Common myeloid progenitor, CD34-positive (primary cell): ENCODE measurements at regions of chr1 and their contacts with region 1.

Region 1: DNA sequence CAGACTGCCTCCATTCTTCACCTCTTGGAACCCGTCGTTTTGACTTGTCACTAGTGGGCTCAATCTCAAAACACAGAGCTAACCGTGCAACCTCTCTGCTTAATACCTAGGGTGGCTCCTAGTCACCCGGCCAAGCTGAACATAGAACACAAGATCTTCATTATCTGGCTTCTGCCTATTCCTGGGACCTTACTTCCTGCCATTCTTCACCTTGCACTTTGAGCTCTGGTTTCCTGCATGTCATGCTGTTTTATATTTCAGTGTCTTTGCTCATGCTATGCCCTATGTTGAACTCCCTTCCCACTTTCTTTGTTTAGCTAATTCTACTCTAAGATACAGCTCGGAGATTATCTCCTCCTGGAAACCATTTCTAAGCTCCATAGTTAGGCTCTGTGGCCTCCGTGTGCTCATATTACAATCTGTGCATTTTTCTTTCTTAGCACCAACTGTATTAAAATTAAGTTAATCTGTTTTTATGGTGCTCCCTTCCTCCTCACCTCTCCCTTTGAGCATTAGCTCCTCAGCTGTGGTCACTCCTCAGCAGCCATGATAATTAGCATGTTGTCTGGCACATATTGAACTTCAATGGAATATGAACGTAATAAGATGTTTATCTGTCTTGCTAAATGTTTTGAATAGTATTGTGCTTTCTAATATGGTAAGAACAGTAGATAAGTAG is 13.1 kb downstream of the GPSM2 start:
- DNase-seq: no peak
- H3K4me3 ChIP-seq: peak overlapping the region in 2 of 7 experiments; percentile 31 to 54
- H3K27ac ChIP-seq: peak overlapping the region in 1 of 2 experiments; percentile 26
- H3K4me1 ChIP-seq: peaks cover 10 to 47% (median 18%) of the 10 kb centered on the region in 4 experiments
- H3K27me3 ChIP-seq: no peaks in the 10 kb centered on the region

Region 2: DNA sequence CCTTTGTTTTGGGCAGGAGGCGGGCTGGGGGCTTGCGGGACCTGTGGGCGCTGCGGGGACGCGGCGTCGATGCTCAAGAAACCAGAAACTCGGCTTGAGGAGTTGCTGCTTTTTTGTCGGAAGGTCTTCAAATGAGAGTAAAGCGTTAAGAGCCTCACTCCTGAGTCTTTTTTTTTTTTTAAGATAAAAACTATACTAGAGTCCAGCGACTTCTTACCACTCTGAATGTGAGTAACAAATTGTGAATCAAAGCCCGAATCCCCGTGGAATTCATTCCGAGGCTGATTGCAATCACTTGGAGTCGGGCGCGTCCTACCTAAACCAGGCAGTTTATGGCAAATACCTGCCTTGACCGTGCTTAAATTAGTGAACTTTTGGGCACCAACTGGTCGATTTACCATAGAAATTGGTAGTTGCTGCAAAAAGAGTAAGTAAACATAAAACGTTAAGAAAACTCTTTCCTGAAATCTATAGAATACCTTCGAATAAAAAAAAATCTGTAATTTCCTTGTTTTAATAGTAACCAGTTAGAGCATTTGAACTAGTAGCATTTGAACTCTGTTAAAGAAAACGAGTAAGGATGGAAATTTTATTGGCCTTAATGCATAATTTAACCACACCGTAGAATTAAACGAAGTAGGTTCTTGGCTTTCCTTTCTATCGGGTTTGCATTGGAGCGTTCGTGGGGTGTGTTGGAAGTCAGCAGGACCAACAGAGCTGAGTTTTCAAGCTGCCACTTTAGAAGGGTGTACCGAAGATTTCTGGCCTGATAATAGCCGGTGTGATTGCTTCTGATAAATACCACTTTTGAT is 12.3 kb before region 1 on chr1:
- CTCF ChIA-PET with region 1: interaction called, 28 read pairs
- POLR2A ChIA-PET with region 1: interaction called, 5 read pairs
- DNase-seq: peak in 1 of 3 donors; percentile 39
- H3K4me3 ChIP-seq: peak overlapping the region; percentile 86 to 99 (median 95)
- H3K27ac ChIP-seq: peak overlapping the region; percentile 61 to 86
- H3K4me1 ChIP-seq: peaks cover 8 to 35% (median 19%) of the 10 kb centered on the region in 4 experiments
- H3K27me3 ChIP-seq: no peaks in the 10 kb centered on the region